ENCODE measurements at regions of chr12 and their contacts with region 1.

Region 1: DNA sequence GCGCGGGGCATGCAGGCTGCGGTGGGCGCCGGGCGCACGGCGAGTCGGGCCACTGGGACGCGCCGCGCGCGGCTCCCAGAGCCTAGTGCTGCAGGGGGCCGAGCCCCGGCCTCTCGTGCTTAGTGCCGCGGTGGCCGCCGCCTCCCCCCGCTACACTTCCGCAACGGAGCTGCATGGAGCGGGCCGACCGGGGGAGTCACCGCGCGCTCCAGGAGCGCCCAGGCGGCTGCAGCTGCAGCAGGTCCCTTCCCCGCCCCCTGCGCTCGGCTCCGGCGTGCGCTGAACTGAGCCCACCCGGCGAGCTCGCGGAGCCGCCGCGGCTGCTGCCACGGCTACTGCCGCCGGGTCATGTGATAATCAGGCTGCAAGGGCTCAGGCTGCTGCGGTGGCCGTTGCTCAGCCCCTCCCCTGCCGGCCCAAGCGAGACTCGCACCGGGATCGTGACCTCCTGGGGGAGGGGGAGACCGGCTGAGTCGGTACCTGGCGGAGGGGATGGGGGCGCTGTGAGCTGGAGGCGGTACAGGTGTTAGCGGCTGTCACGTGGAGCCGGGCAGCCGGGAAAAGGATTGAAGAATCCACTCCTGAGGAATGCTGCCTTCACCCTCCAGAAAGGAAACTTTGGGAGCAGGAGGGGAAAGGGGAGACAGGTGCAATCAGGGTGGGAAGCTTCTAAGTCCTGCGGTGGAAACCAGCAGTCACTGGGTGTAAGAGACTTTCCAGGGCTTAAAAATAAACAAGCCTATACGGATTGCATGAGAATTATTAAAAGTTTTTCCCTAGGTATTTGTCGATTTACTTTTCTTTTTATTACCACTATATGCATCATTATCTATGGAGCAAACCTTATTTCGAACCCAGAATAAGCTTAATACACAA is at the start of gene PPM1H:
- DNase-seq: peak; percentile 89
- ATAC-seq: peak; percentile 80
- H3K4me3 ChIP-seq: peak within 1 kb of the TSS; percentile 82
- H3K27ac ChIP-seq: peak within 1 kb of the TSS; percentile 10
- H3K4me1 ChIP-seq: peaks cover 23% of the 10 kb centered on the region
- H3K27me3 ChIP-seq: no peaks in the 10 kb centered on the region
- CTCF ChIP-seq: peak; percentile 75
- total RNA-seq, gene PPM1H: 9.8 and 12.0 TPM in 2 replicates

Region 2: DNA sequence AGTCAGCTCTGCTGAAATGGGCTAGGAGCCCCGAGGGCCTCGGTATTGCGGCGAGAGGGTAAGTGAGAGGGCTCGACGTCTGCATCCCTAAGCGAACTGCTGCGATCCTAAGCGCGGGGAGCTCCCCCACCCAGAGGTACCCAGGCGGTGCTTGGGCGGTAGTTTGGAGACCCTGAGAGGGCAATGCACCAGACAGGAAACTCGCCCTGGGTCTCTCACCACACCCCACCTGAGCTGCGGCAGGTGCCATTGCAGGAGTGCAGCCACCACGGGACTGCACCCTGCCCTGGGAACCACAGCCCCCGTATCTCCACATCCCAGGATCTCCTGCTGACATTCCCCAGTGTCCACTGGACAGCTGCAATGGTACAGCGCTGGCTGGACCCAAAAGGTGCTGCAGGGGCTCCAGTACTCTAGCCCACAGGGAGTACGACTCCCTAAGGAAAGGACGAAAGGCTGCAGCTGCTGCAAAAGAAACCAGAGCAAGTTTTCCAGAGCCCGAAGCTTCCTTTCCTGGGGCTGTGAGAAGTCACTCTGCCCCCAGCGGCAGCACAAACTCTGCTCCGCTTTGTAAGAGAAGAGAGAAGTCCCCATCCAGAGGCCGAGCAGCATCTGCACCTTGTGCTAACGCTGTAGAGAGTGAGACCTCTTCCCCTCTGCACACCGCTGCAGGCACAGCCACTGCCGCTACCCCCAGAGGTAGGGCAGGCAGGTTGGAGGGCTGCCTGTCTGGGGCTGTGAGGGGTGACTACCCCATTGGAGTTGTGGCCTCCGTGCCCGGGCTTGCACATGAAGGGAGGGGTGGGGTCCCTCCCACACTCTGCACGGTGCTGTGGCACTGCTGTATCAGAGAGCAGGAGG is 499.5 kb before region 1 on chr12:
- CTCF ChIA-PET with region 1: no interaction called
- POLR2A ChIA-PET with region 1: no interaction called
- intact Hi-C with region 1: loop called (anchors 10 kb)
- DNase-seq: peak; percentile 77
- ATAC-seq: peak; percentile 89
- H3K4me3 ChIP-seq: peak overlapping the region; percentile 70
- H3K27ac ChIP-seq: no peak overlapping the region
- H3K4me1 ChIP-seq: no peaks in the 10 kb centered on the region
- H3K27me3 ChIP-seq: 0 out of 2 replicates have a peak, but pooled peaks cover 5% of the 10 kb centered on the region
- CTCF ChIP-seq: peak; percentile 67

Region 3: GRCh38 chr12:62799126-62799736 is 135.8 kb before region 1 on chr12:
- CTCF ChIA-PET with region 1: interaction called, 4 read pairs
- POLR2A ChIA-PET with region 1: interaction called, 3 read pairs
- intact Hi-C with region 1: loop called (anchors 2 kb)
- DNase-seq: peak; percentile 87
- ATAC-seq: peak; percentile 56
- H3K4me3 ChIP-seq: no peak overlapping the region
- H3K27ac ChIP-seq: peak overlapping the region; percentile 91
- H3K4me1 ChIP-seq: peaks cover 17% of the 10 kb centered on the region
- H3K27me3 ChIP-seq: no peaks in the 10 kb centered on the region
- CTCF ChIP-seq: peak; percentile 94

Region 4: GRCh38 chr12:62834971-62835547 is 100.0 kb before region 1 on chr12:
- CTCF ChIA-PET with region 1: no interaction called
- POLR2A ChIA-PET with region 1: no interaction called
- intact Hi-C with region 1: no loop called
- DNase-seq: peak; percentile 50
- ATAC-seq: peak; percentile 59; the same call in 1 of the 2 replicates
- H3K4me3 ChIP-seq: peak overlapping the region; percentile 8; the same call in 1 of the 2 replicates
- H3K27ac ChIP-seq: peak overlapping the region; percentile 15; the same call in 1 of the 2 replicates
- H3K4me1 ChIP-seq: peaks cover 9% of the 10 kb centered on the region; the same call in 1 of the 2 replicates
- H3K27me3 ChIP-seq: no peaks in the 10 kb centered on the region
- CTCF ChIP-seq: no peak

Region 5: DNA sequence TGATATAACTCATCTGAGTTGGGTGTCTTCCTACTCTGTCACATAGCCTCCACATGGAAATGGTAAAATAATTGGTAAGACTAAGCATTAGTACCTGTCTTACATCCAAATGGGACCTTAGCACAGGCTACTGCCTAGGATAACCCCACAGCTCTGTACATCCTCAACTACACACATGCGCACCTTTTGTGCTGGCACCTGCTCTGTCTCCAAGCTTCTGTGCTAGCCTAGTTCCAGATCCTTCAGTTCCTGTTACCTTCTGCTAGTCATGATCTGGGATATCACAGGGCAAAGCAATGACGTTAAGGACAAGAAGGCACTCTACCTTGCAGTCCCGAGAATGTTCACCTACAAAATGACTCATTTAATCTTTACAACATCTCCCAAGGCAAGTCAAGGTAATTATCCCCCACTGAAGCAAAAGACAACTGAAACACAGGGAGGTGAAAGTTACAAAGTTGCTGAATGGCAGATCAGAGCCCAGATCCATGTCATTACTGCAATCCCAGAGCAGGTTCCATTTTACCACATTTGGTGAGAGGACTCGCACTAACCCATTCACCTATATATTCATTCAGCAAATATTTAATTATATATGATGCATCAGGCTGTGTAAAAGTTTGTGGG is 61.8 kb before region 1 on chr12:
- CTCF ChIA-PET with region 1: interaction called, 7 read pairs
- POLR2A ChIA-PET with region 1: no interaction called
- intact Hi-C with region 1: loop called (anchors 2 kb)
- DNase-seq: peak; percentile 82
- ATAC-seq: peak; percentile 81
- H3K4me3 ChIP-seq: peak overlapping the region; percentile 38; the same call in 1 of the 2 replicates
- H3K27ac ChIP-seq: peak overlapping the region; percentile 89
- H3K4me1 ChIP-seq: peaks cover 45% of the 10 kb centered on the region
- H3K27me3 ChIP-seq: no peaks in the 10 kb centered on the region
- CTCF ChIP-seq: no peak

Region 6: GRCh38 chr12:62966990-62967506 is 32.0 kb after region 1 on chr12:
- CTCF ChIA-PET with region 1: interaction called, 4 read pairs
- POLR2A ChIA-PET with region 1: no interaction called
- intact Hi-C with region 1: loop called (anchors 1 kb)
- DNase-seq: peak; percentile 50
- ATAC-seq: peak; percentile 57
- H3K4me3 ChIP-seq: peak overlapping the region; percentile 16; the same call in 1 of the 2 replicates
- H3K27ac ChIP-seq: peak overlapping the region; percentile 78
- H3K4me1 ChIP-seq: peaks cover 39% of the 10 kb centered on the region
- H3K27me3 ChIP-seq: no peaks in the 10 kb centered on the region
- CTCF ChIP-seq: no peak

Region 7: GRCh38 chr12:63068857-63069442 is 133.9 kb after region 1 on chr12:
- CTCF ChIA-PET with region 1: interaction called, 19 read pairs
- POLR2A ChIA-PET with region 1: no interaction called
- intact Hi-C with region 1: loop called (anchors 2 kb)
- DNase-seq: peak; percentile 87
- ATAC-seq: peak; percentile 48
- H3K4me3 ChIP-seq: no peak overlapping the region
- H3K27ac ChIP-seq: no peak overlapping the region
- H3K4me1 ChIP-seq: peaks cover 12% of the 10 kb centered on the region
- H3K27me3 ChIP-seq: no peaks in the 10 kb centered on the region
- CTCF ChIP-seq: peak; percentile 88

Measured in PC-3 (cell line).